CD8-positive, alpha-beta T cell (primary cell): ENCODE measurements at regions of chr2 and their contacts with region 1.

Region 1: DNA sequence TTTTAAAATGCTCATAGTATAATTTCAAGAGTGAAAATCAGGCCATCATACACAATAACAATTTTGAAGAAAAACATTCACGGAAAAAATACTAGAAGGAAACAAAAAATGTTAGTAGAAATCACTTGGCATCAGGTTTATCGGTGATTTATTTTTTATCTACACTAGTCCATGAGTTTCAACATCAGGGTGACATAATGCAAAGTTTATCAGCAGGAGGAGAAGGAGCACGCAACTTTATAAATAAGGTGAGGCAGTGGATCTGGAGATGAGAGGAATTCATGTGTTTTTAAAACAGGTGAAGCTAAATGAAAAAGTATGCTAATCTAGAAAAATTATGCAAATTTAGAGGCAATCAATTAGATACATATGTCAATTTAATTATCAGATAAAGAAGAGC is 54.2 kb downstream of the MGAT4A start:
- DNase-seq: no peak
- ATAC-seq: no peak
- H3K4me3 ChIP-seq: no peak overlapping the region
- H3K4me3 Mint-ChIP-seq: no peak overlapping the region
- H3K27ac ChIP-seq: no peak overlapping the region
- H3K27ac Mint-ChIP-seq: peak overlapping the region; percentile 64
- H3K4me1 ChIP-seq: peaks cover 5% of the 10 kb centered on the region
- H3K4me1 Mint-ChIP-seq: peaks cover 57% of the 10 kb centered on the region
- H3K27me3 ChIP-seq: no peaks in the 10 kb centered on the region
- H3K27me3 Mint-ChIP-seq: no peaks in the 10 kb centered on the region
- CTCF ChIP-seq: no peak

Region 2: GRCh38 chr2:98664327-98664726 is 12.4 kb before region 1 on chr2:
- CTCF ChIA-PET with region 1: interaction called, 4 read pairs
- POLR2A ChIA-PET with region 1: interaction called, 14 read pairs
- intact Hi-C with region 1: no loop called
- DNase-seq: peak; percentile 19 to 86 (median 60)
- ATAC-seq: peak; percentile 68
- H3K4me3 ChIP-seq: peak overlapping the region; percentile 19 to 55
- H3K4me3 Mint-ChIP-seq: peak overlapping the region; percentile 64
- H3K27ac ChIP-seq: peak overlapping the region; percentile 54 to 80
- H3K27ac Mint-ChIP-seq: peak overlapping the region; percentile 95
- H3K4me1 ChIP-seq: peaks cover 64% of the 10 kb centered on the region
- H3K4me1 Mint-ChIP-seq: peaks cover 72% of the 10 kb centered on the region
- H3K27me3 ChIP-seq: no peaks in the 10 kb centered on the region
- H3K27me3 Mint-ChIP-seq: no peaks in the 10 kb centered on the region
- CTCF ChIP-seq: no peak